MCF 10A (cell line): ENCODE measurements at regions of chr15 and their contacts with region 1.

Region 1: DNA sequence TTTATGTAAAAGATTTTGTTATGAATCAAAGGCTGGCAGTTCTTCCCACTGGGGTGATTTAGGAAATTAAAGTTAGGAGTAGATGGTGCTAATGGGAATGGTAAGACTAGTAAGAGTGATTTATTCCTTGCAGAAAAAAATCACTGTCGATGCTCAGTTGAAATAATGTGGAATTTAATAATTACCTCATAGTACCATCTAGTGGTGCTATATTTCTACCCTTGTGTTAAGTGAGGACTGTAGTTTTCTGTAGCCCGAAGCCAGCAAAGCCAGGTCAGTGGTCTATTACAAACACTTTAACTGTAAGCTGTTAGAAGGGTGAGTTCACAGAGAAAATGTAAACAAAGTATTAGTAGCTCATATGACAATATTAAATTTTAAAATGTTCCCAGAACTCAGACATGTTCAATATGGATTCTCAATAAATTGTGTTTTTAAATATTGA is 39.5 kb upstream of the GOLGA8J start:
- DNase-seq: peak; percentile 33
- H3K4me3 Mint-ChIP-seq: no peak overlapping the region
- H3K27ac Mint-ChIP-seq: no peak overlapping the region
- H3K4me1 Mint-ChIP-seq: peaks cover 24% of the 10 kb centered on the region
- H3K27me3 Mint-ChIP-seq: no peaks in the 10 kb centered on the region
- CTCF ChIP-seq: peak; percentile 38

Region 2: DNA sequence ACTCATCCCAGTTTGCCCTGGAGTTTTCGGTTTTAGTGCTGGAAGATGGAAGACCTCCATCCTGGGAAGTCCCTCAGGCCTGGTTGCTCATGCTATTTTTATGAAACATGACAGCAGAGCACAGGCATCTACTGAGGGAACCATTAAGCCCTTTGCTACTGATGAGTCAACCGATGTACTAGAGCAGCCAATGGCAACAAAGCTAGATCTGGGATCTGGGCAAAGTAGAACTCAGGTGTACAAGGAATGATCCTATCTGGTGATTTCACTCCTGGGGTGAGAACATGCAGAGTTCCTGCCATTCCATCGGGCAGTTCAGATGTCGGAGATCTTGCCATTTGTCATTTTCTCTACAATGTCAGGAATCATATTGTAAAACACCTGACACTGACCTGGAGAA is 607.4 kb before region 1 on chr15:
- CTCF ChIA-PET with region 1: no interaction called
- POLR2A ChIA-PET with region 1: no interaction called
- intact Hi-C with region 1: no loop called
- DNase-seq: no peak
- H3K4me3 Mint-ChIP-seq: no peak overlapping the region
- H3K27ac Mint-ChIP-seq: no peak overlapping the region
- H3K4me1 Mint-ChIP-seq: no peaks in the 10 kb centered on the region
- H3K27me3 Mint-ChIP-seq: peaks cover 57% of the 10 kb centered on the region
- CTCF ChIP-seq: no peak

Region 3: GRCh38 chr15:29978411-29979382 is 64.5 kb before region 1 on chr15:
- CTCF ChIA-PET with region 1: no interaction called
- POLR2A ChIA-PET with region 1: no interaction called
- intact Hi-C with region 1: no loop called
- DNase-seq: peak; percentile 19
- H3K4me3 Mint-ChIP-seq: no peak overlapping the region
- H3K27ac Mint-ChIP-seq: peak overlapping the region; percentile 37
- H3K4me1 Mint-ChIP-seq: peaks cover 10% of the 10 kb centered on the region
- H3K27me3 Mint-ChIP-seq: no peaks in the 10 kb centered on the region
- CTCF ChIP-seq: no peak

Region 4: GRCh38 chr15:30023798-30024295 is 19.4 kb before region 1 on chr15:
- CTCF ChIA-PET with region 1: interaction called, 11 read pairs
- POLR2A ChIA-PET with region 1: no interaction called
- intact Hi-C with region 1: no loop called
- DNase-seq: peak; percentile 43
- H3K4me3 Mint-ChIP-seq: no peak overlapping the region
- H3K27ac Mint-ChIP-seq: no peak overlapping the region
- H3K4me1 Mint-ChIP-seq: peaks cover 10% of the 10 kb centered on the region
- H3K27me3 Mint-ChIP-seq: no peaks in the 10 kb centered on the region
- CTCF ChIP-seq: no peak